AG04450 (cell line): ENCODE measurements at regions of chr12 and their contacts with region 1.

Region 1: DNA sequence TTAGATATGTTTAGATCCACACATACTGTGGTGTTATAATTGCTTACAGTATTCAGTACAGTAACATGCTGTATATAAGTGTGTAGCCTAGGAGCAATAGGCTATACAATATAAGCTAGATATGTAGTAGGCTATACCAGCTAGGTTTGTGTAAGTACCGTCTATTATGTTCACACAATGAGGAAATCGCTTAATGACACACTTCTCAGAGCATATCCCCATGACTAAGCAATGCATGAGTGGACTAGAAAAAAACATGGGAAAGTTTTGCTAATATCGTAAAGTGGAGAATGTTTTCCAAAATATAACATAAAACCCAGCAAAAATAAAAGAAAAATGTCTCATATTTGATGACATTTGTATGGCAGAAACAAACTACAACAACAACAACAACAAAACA is 27.3 kb downstream of the AKAP3 start:
- DNase-seq: no peak
- H3K4me3 ChIP-seq: no peak overlapping the region
- H3K27ac ChIP-seq: no peak overlapping the region
- H3K27me3 ChIP-seq: no peaks in the 10 kb centered on the region
- CTCF ChIP-seq: no peak

Region 2: GRCh38 chr12:4604684-4605193 is 16.8 kb before region 1 on chr12:
- CTCF ChIA-PET with region 1: interaction called, 15 read pairs
- POLR2A ChIA-PET with region 1: no interaction called
- DNase-seq: peak; percentile 68
- H3K4me3 ChIP-seq: peak overlapping the region; percentile 75
- H3K27ac ChIP-seq: peak overlapping the region; percentile 25
- H3K27me3 ChIP-seq: peaks cover 6% of the 10 kb centered on the region
- CTCF ChIP-seq: peak; percentile 100